ENCODE measurements at regions of chr15 and their contacts with region 1.

Region 1: GRCh38 chr15:46496491-46497115 is 861.8 kb downstream of the SQOR start:
- DNase-seq: no peak
- H3K4me3 ChIP-seq: no peak overlapping the region
- CTCF ChIP-seq: no peak
- POLR2A ChIP-seq: no peak

Region 2: GRCh38 chr15:46166750-46167149 is 329.9 kb before region 1 on chr15:
- intact Hi-C with region 1: no loop called
- DNase-seq: no peak
- H3K4me3 ChIP-seq: no peak overlapping the region
- CTCF ChIP-seq: no peak
- POLR2A ChIP-seq: no peak

Region 3: GRCh38 chr15:46312133-46312740 is 184.4 kb before region 1 on chr15:
- intact Hi-C with region 1: loop called (anchors 10 kb)
- DNase-seq: peak; percentile 51 to 90
- H3K4me3 ChIP-seq: no peak overlapping the region
- CTCF ChIP-seq: peak in 1 of 3 donors; percentile 63
- POLR2A ChIP-seq: no peak

Region 4: GRCh38 chr15:46815765-46816164 is 319.2 kb after region 1 on chr15:
- intact Hi-C with region 1: no loop called
- DNase-seq: no peak
- H3K4me3 ChIP-seq: no peak overlapping the region
- CTCF ChIP-seq: no peak
- POLR2A ChIP-seq: no peak